ENCODE measurements at regions of chr10 and their contacts with region 1.

Region 1: GRCh38 chr10:114821293-114821914 is at the start of gene FHIP2A:
- DNase-seq: peak; percentile 66
- ATAC-seq: peak; percentile 83
- H3K4me3 ChIP-seq: peak within 1 kb of the TSS; percentile 97
- H3K27ac ChIP-seq: peak within 1 kb of the TSS; percentile 99
- H3K4me1 ChIP-seq: peaks cover 5% of the 10 kb centered on the region
- H3K27me3 ChIP-seq: no peaks in the 10 kb centered on the region
- CTCF ChIP-seq: peak; percentile 73
- POLR2A ChIP-seq: peak; percentile 27; the same call in 1 of the 2 replicates
- RAD21 ChIP-seq: peak; percentile 39
- total RNA-seq, gene FHIP2A: 16.5 and 21.7 TPM in 2 replicates

Region 2: GRCh38 chr10:114714281-114714741 is 107.1 kb before region 1 on chr10:
- CTCF ChIA-PET with region 1: interaction called, 3 read pairs
- POLR2A ChIA-PET with region 1: no interaction called
- dilution Hi-C with region 1: no loop called
- in situ Hi-C with region 1: no loop called
- intact Hi-C with region 1: loop called (anchors 2 kb)
- DNase-seq: peak; percentile 98
- ATAC-seq: peak; percentile 95
- H3K4me3 ChIP-seq: no peak overlapping the region
- H3K27ac ChIP-seq: peak overlapping the region; percentile 76
- H3K4me1 ChIP-seq: peaks cover 14% of the 10 kb centered on the region
- H3K27me3 ChIP-seq: no peaks in the 10 kb centered on the region
- CTCF ChIP-seq: no peak
- POLR2A ChIP-seq: no peak
- RAD21 ChIP-seq: no peak

Region 3: DNA sequence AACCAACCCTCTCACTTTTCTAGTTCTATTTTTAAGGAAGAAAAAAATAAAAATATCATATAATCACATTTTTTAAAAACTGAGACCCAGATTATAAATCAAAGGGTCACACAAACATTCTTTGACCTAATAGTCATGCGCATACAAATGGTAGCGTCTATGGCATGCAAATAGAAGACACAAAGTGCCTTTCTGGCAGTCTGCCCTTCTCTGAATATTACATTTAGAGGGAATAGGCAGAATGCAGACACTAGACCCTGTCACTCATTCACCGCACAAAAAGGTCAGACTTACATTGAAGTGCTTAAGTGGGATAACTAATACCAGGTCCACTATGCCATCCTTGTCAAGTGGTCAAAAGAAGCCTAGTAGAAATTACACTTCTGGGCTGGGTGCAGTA is 26.4 kb before region 1 on chr10:
- CTCF ChIA-PET with region 1: no interaction called
- POLR2A ChIA-PET with region 1: no interaction called
- dilution Hi-C with region 1: no loop called
- in situ Hi-C with region 1: no loop called
- intact Hi-C with region 1: loop called (anchors 2 kb)
- DNase-seq: no peak
- ATAC-seq: no peak
- H3K4me3 ChIP-seq: no peak overlapping the region
- H3K27ac ChIP-seq: no peak overlapping the region
- H3K4me1 ChIP-seq: no peaks in the 10 kb centered on the region
- H3K27me3 ChIP-seq: no peaks in the 10 kb centered on the region
- CTCF ChIP-seq: no peak
- POLR2A ChIP-seq: no peak
- RAD21 ChIP-seq: no peak

Region 4: GRCh38 chr10:114856544-114857282 is 35.3 kb after region 1 on chr10:
- CTCF ChIA-PET with region 1: no interaction called
- POLR2A ChIA-PET with region 1: no interaction called
- dilution Hi-C with region 1: no loop called
- in situ Hi-C with region 1: no loop called
- intact Hi-C with region 1: loop called (anchors 2 kb)
- DNase-seq: peak; percentile 90
- ATAC-seq: peak; percentile 86
- H3K4me3 ChIP-seq: no peak overlapping the region; the same call in 1 of the 2 replicates
- H3K27ac ChIP-seq: peak overlapping the region; percentile 96
- H3K4me1 ChIP-seq: peaks cover 14% of the 10 kb centered on the region
- H3K27me3 ChIP-seq: no peaks in the 10 kb centered on the region
- CTCF ChIP-seq: no peak
- POLR2A ChIP-seq: no peak
- RAD21 ChIP-seq: no peak

Region 5: GRCh38 chr10:114996542-114996941 is 175.1 kb after region 1 on chr10:
- CTCF ChIA-PET with region 1: no interaction called
- POLR2A ChIA-PET with region 1: interaction called, 15 read pairs
- dilution Hi-C with region 1: no loop called
- in situ Hi-C with region 1: no loop called
- intact Hi-C with region 1: no loop called
- DNase-seq: peak; percentile 81
- ATAC-seq: peak; percentile 56
- H3K4me3 ChIP-seq: no peak overlapping the region
- H3K27ac ChIP-seq: no peak overlapping the region
- H3K4me1 ChIP-seq: peaks cover 7% of the 10 kb centered on the region
- H3K27me3 ChIP-seq: no peaks in the 10 kb centered on the region
- CTCF ChIP-seq: no peak
- POLR2A ChIP-seq: no peak
- RAD21 ChIP-seq: no peak

Region 6: DNA sequence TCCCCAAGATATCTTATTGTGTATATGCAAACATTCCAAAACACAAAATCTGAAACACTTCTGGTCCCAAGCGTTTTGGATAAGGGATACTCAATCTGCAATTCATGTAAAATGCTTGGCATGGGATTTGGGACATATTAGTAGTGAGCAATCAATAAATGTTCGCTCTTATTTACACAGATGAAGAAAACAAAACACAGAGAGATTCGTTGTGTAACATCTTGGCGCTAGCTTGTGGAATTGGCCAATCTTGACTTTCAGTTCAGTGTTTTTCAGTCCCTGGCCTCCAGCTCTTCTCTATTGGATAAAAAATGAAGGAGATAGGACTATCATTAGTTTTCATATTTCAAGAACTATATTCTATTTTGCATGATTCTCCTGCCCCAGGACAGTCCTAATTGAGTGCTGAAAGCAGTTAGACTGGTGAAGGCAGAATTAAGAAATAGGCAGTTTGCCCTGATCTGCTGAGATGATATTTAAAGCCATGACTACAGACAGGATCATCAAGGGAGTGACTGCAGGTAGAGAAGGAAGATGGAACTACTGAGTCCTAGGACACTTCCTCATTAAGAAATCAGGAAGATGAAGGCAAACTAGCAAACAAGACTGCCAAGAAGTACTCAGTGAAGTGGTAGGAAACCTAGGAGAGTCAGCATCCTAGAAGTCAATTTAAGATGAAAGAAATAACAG is 1608.0 kb after region 1 on chr10:
- CTCF ChIA-PET with region 1: no interaction called
- POLR2A ChIA-PET with region 1: no interaction called
- dilution Hi-C with region 1: no loop called
- in situ Hi-C with region 1: no loop called
- intact Hi-C with region 1: no loop called
- DNase-seq: no peak
- ATAC-seq: no peak
- H3K4me3 ChIP-seq: no peak overlapping the region
- H3K27ac ChIP-seq: no peak overlapping the region
- H3K4me1 ChIP-seq: no peaks in the 10 kb centered on the region
- H3K27me3 ChIP-seq: no peaks in the 10 kb centered on the region
- CTCF ChIP-seq: no peak
- POLR2A ChIP-seq: no peak
- RAD21 ChIP-seq: no peak